GM18951 (cell line): ENCODE measurements at regions of chr14 and their contacts with region 1.

Region 1: DNA sequence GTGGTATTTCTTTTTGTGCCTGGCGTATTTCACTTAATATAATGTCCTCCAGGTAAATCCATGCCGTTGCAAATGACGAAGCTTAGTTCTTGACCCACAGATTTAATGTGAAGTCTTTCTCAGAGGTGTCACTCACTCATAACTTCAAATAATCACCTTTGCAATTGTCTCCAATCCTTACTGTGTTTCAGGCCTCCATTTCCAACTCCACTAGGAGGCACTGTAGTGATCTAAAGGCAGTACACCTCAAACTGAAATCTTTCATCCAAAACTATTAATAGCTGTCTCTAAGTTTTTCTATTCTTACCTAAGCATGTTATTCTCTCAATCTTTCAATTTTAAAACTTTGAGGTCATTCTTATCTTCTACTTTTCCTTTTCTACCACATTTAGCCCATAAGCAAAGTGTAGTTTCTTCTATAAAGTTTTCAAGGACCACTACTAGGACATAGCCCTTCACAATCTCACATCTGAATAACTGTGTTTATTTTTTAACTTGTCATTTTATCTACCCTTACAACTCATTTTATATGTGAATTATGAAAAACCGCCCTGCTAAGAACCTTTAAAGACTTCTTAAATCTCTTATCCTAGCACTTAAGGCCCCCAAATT is 25.5 kb upstream of the FBXO34 start:
- POLR2A ChIP-seq: no peak

Region 2: DNA sequence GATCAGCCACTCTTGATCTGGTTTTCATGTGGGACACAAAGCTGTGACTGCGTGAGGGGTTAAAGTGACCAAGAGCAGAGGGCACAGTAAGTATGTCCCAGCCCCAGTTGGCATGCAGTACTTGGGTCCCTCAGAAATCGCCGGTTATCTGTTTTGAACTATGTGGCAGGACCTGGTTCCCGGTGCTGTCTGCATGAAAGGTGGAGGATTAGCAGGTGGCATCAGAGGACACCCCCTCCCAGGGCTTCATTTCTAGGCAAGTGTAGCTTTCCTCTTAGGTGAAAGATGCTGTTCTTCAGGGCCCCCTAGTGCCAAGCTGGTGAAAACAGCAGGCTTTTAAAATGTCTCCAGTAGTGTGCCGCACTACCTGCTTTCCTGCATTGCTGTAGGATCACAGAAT is 108.7 kb after region 1 on chr14:
- in situ Hi-C with region 1: loop called (anchors 10 kb)
- POLR2A ChIP-seq: no peak

Region 3: DNA sequence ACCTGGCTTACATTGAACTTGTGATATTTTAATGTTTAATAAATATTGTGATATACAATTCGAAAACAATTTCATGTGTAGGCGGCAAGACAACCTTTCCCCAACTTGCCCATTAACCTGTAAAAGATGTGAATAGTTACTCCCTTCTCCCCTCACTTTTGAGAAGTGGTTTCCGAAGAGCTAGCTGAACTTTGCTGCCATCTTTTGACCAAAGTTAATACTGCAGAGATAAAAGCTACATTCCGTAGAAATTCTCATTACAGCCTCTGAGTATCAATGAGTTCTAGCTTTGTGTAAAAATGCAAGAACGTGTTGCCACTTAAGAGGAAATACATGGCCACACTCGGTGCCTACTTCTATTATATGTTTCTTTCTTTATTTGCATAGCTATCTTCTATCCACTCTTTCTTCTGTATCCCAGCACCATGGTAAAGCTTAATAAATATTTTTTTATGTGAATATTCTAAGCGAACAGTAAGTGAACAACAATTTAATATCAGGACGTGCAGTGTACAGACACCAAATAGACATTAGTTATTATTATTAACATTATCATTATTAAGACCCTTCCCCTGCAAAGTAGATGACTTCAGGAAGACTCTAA is 1228.8 kb after region 1 on chr14:
- in situ Hi-C with region 1: loop called (anchors 25 kb)
- POLR2A ChIP-seq: no peak